H1 (cell line): ENCODE measurements at regions of chr16 and their contacts with region 1.

Region 1: DNA sequence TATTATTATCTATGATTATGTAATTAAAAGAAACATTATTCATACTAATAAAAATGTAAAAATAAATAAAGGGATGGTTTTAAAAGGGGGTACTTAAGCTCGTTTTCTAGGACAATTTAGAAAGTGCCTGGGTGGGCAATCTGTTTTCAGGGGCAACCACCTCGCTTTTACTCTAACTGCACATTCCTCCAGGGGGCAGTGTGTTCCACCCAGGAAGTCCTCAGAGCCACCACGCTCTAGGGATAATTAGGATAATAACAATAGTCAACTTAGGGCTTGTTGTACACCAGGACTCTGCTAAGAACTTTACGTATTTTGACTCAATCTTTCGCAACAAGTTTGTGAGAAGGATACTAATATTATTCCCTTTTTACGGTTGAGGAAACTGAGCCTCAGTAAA is 396.7 kb upstream of the MAF start:
- DNase-seq: peak in 1 of 2 experiments; percentile 60
- H3K4me3 ChIP-seq: no peak overlapping the region
- H3K27ac ChIP-seq: no peak overlapping the region
- H3K4me1 ChIP-seq: peaks cover 0 to 5% (median 3%) of the 10 kb centered on the region in 4 experiments; a peak in 2 of 7 replicates
- H3K27me3 ChIP-seq: no peaks in the 10 kb centered on the region
- CTCF ChIP-seq: peak; percentile 44 to 62 (median 60)
- EP300 ChIP-seq: no peak
- POLR2A ChIP-seq: no peak
- RAD21 ChIP-seq: peak; percentile 57 to 61

Region 2: DNA sequence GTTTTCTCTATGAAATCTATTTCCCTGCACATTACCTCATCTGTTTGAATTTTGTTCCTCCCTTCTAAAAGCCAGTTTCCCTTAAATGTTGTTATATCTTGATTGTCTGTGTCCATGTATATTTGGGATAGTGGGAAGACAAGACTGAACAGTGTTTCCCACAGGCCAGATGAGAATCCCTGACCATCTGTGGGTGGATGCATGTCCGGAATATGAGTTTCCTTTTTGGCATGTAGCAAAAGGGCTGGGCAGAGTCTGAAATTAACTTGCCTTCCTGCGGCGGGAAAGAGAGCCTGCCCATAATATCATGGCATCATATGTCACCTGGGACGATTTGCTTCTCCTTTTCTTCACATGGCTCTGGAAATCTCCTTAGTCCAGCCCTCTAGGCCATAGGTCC is 10.9 kb before region 1 on chr16:
- CTCF ChIA-PET with region 1: interaction called, 13 read pairs
- POLR2A ChIA-PET with region 1: no interaction called
- DNase-seq: no peak
- H3K4me3 ChIP-seq: no peak overlapping the region
- H3K27ac ChIP-seq: no peak overlapping the region
- H3K4me1 ChIP-seq: no peaks in the 10 kb centered on the region
- H3K27me3 ChIP-seq: no peaks in the 10 kb centered on the region
- CTCF ChIP-seq: no peak
- EP300 ChIP-seq: no peak
- POLR2A ChIP-seq: no peak
- RAD21 ChIP-seq: no peak